ENCODE measurements at regions of chr7 and their contacts with region 1.

Region 1: DNA sequence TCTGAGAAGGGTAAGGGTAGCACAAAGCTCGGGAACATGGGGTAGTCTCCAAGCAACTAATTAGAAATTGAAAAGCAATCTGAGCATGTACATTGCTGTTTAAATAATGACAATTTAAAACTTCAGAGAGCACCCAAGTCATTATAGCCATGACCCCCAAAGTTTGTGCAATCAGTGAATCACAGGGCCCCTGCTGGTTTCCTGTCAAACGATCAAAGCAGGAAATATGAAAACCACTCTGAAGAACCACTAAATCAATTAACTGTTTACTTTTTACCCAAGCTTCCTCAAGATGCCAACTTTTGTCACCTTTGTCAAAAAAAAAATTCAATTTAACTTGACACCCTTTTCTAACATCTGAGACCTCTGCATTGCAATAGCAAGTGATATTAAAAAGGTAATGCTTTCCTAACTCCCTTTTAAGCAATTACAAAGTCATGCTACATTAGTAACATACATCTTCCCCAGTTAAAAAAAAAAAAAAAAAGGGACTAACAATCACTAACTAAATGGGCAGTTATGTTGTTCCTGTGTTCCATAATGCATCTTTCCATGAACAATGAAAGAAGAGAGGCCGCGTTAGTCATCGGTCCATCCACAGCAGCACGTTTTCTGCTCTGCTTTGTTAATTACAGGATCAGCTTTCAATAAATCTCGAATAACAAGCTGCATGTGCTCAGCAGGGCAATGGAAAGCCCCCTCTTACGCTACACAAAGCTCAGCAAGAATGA is 80.6 kb downstream of the ETV1 start:
- DNase-seq: no peak
- H3K4me3 Mint-ChIP-seq: peak overlapping the region; percentile 33
- H3K27ac Mint-ChIP-seq: no peak overlapping the region
- H3K4me1 Mint-ChIP-seq: peaks cover 25% of the 10 kb centered on the region
- H3K27me3 Mint-ChIP-seq: peaks cover 1% of the 10 kb centered on the region

Region 2: DNA sequence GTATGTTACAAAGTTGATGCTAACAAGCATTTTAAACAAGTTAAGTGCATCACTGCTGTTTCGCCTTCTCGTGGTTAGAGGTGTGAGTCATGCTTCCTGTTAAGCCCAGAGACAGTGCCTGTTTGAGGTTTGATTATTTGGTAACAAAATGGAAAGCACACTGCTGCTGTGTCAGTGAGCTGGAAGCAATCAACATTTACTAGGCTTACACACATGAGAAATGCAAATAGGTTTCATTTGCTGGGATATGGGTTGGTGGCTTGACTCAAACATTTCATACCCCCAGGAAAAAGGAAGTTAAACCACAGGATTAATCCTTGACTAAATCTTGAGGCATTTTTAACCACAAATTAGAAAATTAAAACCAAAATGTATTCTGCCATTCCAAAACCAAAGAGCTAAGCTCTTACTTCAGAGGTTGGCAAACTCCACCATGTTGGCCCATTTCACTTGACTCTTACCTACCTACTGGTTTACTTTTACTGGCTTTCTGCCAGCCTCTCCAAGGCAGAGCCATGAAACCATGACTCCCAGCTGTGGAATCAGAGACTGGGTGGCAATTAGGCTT is 58.6 kb before region 1 on chr7:
- intact Hi-C with region 1: loop called (anchors 5 kb)
- DNase-seq: peak; percentile 41
- H3K4me3 Mint-ChIP-seq: no peak overlapping the region
- H3K27ac Mint-ChIP-seq: no peak overlapping the region
- H3K4me1 Mint-ChIP-seq: peaks cover 18% of the 10 kb centered on the region
- H3K27me3 Mint-ChIP-seq: peaks cover 1% of the 10 kb centered on the region